GM18951 (cell line): ENCODE measurements at regions of chr3 and their contacts with region 1.

Region 1: GRCh38 chr3:66407611-66408218 is 93.1 kb downstream of the LRIG1 start:
- POLR2A ChIP-seq: no peak

Region 2: DNA sequence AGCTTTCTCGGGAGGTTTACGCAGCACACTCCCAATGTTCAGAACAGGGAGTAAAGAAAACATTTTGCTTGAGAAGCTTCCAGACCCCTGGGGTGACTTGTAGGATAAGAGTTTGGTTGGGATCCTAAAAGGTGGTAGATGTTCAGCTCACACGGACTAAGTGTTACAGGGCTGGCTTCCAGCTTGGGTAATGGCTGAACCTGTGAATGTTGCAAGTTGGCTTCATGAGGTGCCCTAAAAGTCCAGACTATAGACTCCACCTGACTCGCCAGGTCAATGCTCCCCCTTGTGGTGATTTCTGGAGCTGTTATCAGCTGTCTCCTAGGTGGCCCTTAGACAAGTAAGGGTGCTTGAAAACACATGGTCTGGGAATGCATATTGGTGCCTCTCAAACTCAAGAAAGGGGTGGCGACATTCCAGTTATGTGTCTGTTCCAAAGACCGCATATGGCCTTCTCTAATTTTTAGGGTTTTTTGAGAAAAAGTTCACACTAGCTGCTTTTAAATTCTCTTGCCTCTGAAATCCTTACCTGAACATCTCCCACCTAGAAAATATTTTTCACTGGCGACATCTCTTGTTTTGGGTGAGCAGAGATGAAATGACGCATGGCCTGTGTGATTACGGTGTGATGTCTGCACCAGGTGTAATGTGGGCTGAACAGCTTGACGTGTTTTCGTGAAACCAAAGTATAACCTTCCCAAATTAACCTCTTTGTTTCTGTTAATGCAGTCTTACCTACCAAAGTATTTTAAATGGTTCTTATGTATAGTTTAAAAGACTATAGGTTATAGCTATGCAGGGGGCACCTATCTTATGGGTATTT is 414.7 kb after region 1 on chr3:
- in situ Hi-C with region 1: loop called (anchors 25 kb)
- POLR2A ChIP-seq: no peak